ENCODE measurements at regions of chr18 and their contacts with region 1.

Region 1: GRCh38 chr18:35343936-35344735 is at the start of gene ZNF24:
- DNase-seq: peak; percentile 96 to 97
- ATAC-seq: peak; percentile 98 to 99 (median 98)
- H3K4me3 ChIP-seq: peak within 1 kb of the TSS; percentile 82 to 99 (median 90)
- H3K27ac ChIP-seq: peak within 1 kb of the TSS; percentile 97 to 100 (median 99)
- H3K4me1 ChIP-seq: peaks cover 0 to 54% (median 49%) of the 10 kb centered on the region in 9 donors
- H3K27me3 ChIP-seq: no peaks in the 10 kb centered on the region
- CTCF ChIP-seq: no peak
- total RNA-seq, gene ZNF24: 41.1 to 55.1 (median 47.8) TPM

Region 2: GRCh38 chr18:35029770-35030169 is 314.4 kb before region 1 on chr18:
- intact Hi-C with region 1: loop called in 1 of 10 experiments (anchors 10 kb)
- DNase-seq: no peak
- ATAC-seq: peak in 4 of 8 donors; percentile 39 to 56 (median 50)
- H3K4me3 ChIP-seq: peak overlapping the region in 9 of 10 donors; percentile 4 to 50 (median 36)
- H3K27ac ChIP-seq: peak overlapping the region in 9 of 10 donors; percentile 3 to 92 (median 42)
- H3K4me1 ChIP-seq: peaks cover 8 to 45% (median 30%) of the 10 kb centered on the region in 9 donors
- H3K27me3 ChIP-seq: no peaks in the 10 kb centered on the region
- CTCF ChIP-seq: peak in 4 of 9 donors; percentile 15 to 36 (median 28)

Region 3: GRCh38 chr18:35240664-35241447 is 103.3 kb before region 1 on chr18 and contains the start of gene ZNF397:
- intact Hi-C with region 1: loop called in 5 of 10 experiments (anchors 1 to 2 kb)
- DNase-seq: peak; percentile 98 to 99
- ATAC-seq: peak; percentile 100
- H3K4me3 ChIP-seq: peak within 1 kb of the TSS; percentile 54 to 92 (median 74)
- H3K27ac ChIP-seq: peak within 1 kb of the TSS; percentile 93 to 99 (median 98)
- H3K4me1 ChIP-seq: peaks cover 0 to 21% (median 13%) of the 10 kb centered on the region in 9 donors
- H3K27me3 ChIP-seq: no peaks in the 10 kb centered on the region
- CTCF ChIP-seq: peak in 2 of 9 donors; percentile 4 to 19
- total RNA-seq, gene ZNF397: 12.7 to 18.6 (median 14.6) TPM

Region 4: GRCh38 chr18:35267161-35267651 is 76.9 kb before region 1 on chr18:
- intact Hi-C with region 1: loop called in 2 of 10 experiments (anchors 1 to 2 kb)
- DNase-seq: peak; percentile 85
- ATAC-seq: peak; percentile 95 to 98 (median 98)
- H3K4me3 ChIP-seq: peak overlapping the region; percentile 38 to 88 (median 73)
- H3K27ac ChIP-seq: peak overlapping the region; percentile 21 to 93 (median 87)
- H3K4me1 ChIP-seq: peaks cover 0 to 12% (median 5%) of the 10 kb centered on the region in 9 donors
- H3K27me3 ChIP-seq: no peaks in the 10 kb centered on the region
- CTCF ChIP-seq: peak in 3 of 9 donors; percentile 6 to 31 (median 15)

Region 5: DNA sequence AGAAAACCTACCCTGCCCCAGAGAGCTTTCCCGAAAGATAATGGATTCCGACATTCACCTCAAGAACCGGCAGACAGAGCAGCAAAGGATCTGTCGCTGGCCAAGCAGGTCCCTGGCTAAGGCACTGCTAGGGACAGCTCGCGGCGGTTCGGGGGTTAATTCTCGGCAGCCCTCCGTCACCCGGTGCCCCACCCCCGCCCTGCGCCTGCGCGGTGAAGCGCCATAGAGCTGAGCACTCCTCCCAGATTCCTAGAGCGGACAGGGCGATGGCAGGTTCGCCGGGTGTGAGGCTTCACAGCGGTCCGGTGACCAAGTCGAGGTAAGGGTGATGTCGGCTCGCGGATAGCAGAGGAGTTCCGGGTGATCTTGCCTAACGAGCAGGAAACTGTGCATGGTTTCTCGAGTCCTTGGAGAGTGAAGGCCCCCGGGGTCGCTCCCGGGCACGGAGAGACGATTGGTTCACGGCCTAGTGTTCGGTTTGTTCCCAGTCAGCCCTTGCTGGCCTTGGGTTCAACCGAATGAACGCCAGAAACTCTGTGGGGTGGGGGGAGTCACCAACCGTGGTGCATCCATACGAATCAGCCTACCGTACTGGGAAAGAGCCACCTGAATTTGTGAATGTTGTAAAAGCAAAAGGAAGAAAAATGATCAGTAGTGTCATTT is 53.9 kb before region 1 on chr18 and contains the start of gene ZSCAN30:
- intact Hi-C with region 1: loop called in 8 of 10 experiments (anchors 2 to 10 kb)
- DNase-seq: peak; percentile 95 to 96
- ATAC-seq: peak; percentile 99 to 100 (median 100)
- H3K4me3 ChIP-seq: peak within 1 kb of the TSS; percentile 60 to 93 (median 79)
- H3K27ac ChIP-seq: peak within 1 kb of the TSS; percentile 43 to 93 (median 82)
- H3K4me1 ChIP-seq: peaks cover 7 to 37% (median 28%) of the 10 kb centered on the region in 9 donors
- H3K27me3 ChIP-seq: no peaks in the 10 kb centered on the region
- CTCF ChIP-seq: no peak
- total RNA-seq, gene ZSCAN30: 11.6 to 16.4 (median 14.2) TPM

Measured in heart right ventricle (tissue), 16 donors.